Right ventricle myocardium inferior (tissue), 1 donor: ENCODE measurements at regions of chr5 and their contacts with region 1.

Region 1: GRCh38 chr5:170638454-170639220 is 134.8 kb downstream of the KCNIP1 start:
- DNase-seq: no peak
- ATAC-seq: peak; percentile 66

Region 2: DNA sequence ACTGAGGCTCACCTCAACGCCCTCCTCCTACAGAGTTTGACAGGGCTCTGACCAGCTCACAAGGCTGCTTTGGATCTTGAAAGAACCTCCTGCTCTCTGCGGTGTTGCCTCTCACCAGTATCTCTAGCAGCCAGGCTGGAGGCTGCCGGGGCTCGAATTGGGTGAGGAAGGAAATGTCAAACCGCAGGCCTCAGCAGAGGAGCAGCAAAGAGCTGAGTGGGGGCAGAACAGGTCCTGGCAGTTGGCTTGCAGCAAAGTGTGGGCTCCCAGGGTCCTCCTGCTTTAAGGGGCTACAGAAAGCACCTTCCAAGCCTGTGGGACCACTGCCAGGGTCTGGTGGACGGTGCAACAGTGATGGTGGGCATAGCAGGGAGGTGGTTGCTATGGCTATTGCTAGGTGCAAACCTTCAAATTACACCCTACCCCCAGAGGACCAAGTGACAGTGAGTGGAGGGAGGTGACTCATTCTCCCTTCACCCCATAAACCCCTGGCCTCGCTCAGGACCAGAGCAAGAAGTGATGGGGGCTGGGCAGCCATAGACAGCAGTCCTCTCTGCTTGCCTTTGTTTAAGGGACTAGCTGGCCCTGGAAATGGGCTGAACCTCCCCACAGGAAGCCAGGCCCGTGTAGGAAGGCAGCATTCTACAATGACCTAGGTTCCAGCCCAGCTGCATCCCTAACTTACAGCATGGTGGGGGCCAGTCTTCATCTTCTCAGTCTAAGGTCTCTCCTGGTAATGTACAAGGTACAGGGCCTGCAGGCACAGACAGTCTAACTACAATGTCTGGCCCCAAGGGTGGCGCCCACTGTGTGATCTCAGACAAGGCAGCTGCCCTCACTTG is 359.8 kb before region 1 on chr5:
- intact Hi-C with region 1: loop called (anchors 10 kb)
- DNase-seq: peak; percentile 91
- ATAC-seq: peak; percentile 45

Region 3: GRCh38 chr5:170312666-170313065 is 326.0 kb before region 1 on chr5:
- intact Hi-C with region 1: no loop called
- DNase-seq: no peak
- ATAC-seq: no peak

Region 4: DNA sequence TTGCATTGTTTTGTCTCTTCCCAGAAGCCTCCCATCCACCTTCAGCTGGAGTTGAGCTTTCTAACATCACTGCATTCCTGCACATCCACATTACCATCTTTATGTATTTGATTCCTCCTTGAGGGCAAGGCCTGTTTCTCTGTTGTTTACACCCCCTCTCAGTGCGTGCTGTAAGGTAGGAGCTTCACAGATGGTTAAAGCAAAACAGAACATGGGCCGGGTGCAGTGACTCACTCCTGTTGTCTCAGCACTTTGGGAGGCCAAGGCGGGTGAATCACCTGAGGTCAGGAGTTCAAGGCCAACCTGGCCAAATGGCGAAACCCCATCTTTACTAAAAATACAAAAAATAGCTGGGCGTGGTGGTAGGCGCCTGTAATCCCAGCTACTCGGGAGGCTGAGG is 23.9 kb before region 1 on chr5:
- intact Hi-C with region 1: no loop called
- DNase-seq: no peak
- ATAC-seq: no peak

Region 5: GRCh38 chr5:170740551-170741205 is 102.0 kb after region 1 on chr5:
- intact Hi-C with region 1: loop called (anchors 5 kb)
- DNase-seq: no peak
- ATAC-seq: no peak

Region 6: DNA sequence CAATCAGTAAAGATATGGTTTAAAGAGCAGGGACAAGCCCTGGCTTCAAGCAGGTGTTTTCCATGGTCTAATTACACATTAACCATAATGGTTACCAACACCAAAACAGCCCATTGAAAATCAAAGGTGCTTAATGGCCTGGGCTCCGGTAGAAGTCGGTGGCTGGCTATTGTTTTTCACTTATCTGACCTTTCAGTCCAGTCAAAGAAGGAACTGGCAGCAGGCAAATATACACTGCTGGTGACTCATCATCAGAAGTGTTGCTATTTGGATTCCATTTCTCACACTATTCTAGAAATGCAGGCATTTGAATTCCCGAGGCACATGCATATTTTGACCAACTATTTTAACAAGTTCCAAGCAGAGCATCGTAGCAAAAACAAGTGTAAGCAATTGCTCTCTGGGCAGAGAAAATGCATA is 118.6 kb after region 1 on chr5:
- intact Hi-C with region 1: no loop called
- DNase-seq: no peak
- ATAC-seq: peak; percentile 63

Region 7: DNA sequence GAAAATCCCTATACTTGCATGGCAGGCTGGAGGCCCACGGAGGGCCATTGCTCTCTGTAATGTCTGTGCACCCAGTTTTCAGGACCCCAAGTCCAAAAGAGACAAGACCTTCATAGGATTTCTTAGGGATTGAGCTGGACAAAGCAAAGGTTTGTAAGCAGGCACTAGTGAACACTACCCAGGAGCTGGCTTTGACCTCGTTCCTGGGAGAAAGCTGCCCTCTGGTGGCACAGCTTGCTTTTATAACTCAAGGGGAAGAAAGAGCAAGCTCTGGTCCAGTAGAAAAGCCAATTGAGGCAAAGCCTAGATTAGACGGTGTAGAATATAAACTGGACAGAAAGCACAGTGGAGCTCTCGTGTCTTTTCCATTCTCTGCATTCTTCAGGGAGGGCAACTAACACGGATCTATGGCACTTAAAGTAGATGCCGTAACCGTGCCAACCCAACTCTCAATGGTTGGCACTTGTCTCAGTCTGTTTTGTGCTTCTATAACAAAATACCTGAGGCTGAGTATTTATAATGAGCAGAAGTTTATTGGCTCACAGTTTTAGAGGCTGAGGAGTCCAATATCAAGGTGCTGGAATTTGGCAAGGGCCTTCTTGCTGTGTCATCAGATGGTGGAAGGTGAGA is 152.8 kb after region 1 on chr5:
- intact Hi-C with region 1: loop called (anchors 1 kb)
- DNase-seq: no peak
- ATAC-seq: peak; percentile 70

Region 8: DNA sequence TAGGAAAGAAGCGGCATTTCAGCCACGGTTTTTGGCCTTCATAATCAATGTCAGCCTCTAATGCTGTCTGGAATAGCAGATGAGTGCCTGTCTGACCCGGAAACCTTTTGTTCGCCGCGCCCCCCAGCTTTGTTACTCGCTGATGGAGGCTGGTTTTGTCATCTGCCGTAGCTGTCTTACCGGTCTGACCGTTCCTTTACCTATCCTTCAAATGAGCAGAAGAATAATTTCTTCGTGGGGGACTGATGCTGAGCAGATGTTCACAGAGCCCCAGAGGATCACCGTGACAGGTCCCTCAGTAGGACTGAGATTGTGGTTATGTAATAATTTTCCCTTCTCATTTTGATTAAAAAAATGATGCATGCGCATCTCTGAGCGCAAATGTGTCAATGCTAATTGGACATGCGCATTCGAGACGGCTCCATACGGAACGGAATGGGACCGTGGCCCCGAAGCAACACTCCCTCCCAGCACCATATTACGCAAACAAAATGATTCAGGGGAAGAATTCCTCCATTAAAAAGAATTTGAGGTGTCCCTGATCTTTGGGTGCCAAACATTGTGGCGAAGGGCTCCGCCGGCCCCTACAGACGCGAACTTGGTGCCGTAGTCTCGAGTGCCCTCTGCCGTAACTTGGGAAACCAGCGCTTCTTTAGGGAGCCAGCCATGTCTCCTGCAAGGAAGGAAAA is 698.0 kb after region 1 on chr5:
- intact Hi-C with region 1: loop called (anchors 2 kb)
- DNase-seq: no peak
- ATAC-seq: peak; percentile 69